CD14-positive monocyte (primary cell): ENCODE measurements at regions of chrX and their contacts with region 1.

Region 1: GRCh38 chrX:129843459-129844306 is at the start of gene ZDHHC9:
- DNase-seq: peak; percentile 75 to 80 (median 76)
- H3K4me3 ChIP-seq: peak within 1 kb of the TSS; percentile 64 to 79 (median 73)
- H3K4me3 Mint-ChIP-seq: peak within 1 kb of the TSS; percentile 86 to 91
- H3K27ac ChIP-seq: peak within 1 kb of the TSS in 1 of 2 donors; percentile 63
- H3K27ac Mint-ChIP-seq: peak within 1 kb of the TSS in 6 of 7 donors; percentile 65 to 88 (median 82)
- H3K4me1 ChIP-seq: peaks cover 9 to 15% of the 10 kb centered on the region in 2 donors
- H3K4me1 Mint-ChIP-seq: peaks cover 15% of the 10 kb centered on the region
- H3K27me3 ChIP-seq: no peaks in the 10 kb centered on the region
- H3K27me3 Mint-ChIP-seq: peaks cover 4 to 8% (median 5%) of the 10 kb centered on the region in 3 donors
- CTCF ChIP-seq: no peak
- polyA plus RNA-seq, gene ZDHHC9: 1.5 to 2.8 (median 2.7) TPM

Region 2: DNA sequence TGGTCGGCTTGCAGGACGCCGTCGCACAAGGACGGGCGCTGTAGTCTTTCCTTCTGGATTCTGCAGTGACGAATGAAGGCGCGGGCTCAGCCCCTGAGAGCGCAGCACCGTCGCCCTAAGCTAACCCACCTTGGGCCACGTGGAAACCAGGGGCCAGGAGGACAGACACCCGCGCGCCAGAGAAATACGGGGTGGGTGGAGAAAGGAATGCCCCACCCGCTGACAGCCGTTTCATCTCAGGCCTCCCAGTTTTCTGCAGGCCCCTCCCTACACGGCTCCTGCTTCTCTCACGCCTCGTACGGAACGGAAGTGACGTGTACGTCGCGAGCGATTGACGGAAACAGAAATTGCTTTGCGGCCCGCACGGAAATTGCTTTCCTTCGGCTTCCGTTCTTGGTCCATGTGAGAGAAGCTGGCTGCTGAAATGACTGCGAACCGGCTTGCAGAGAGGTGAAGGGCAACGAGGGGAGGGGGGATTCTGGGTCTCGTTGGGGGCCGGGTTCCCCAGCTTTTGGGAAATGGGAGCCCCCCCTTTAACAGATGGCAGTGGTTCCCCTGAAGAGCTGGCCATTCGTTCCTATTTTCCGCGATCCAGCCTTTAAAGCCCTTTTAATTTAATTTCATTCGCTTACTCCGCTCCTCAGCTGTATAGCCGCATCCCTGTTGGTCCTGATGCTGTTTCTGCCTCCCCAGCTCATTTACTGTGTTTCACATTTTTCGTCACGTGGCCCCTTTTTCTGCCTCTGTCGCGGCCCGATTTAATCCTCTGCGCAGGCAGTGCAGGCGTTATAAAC is 62.3 kb after region 1 on chrX and contains the start of gene UTP14A:
- intact Hi-C with region 1: loop called in 1 of 2 experiments (anchors 10 kb)
- DNase-seq: peak; percentile 83 to 88 (median 85)
- H3K4me3 ChIP-seq: peak within 1 kb of the TSS; percentile 75 to 85 (median 79)
- H3K4me3 Mint-ChIP-seq: peak within 1 kb of the TSS; percentile 87 to 92
- H3K27ac ChIP-seq: peak within 1 kb of the TSS; percentile 60 to 81
- H3K27ac Mint-ChIP-seq: peak within 1 kb of the TSS; percentile 85 to 95 (median 90)
- H3K4me1 ChIP-seq: peaks cover 5 to 7% of the 10 kb centered on the region in 2 donors
- H3K4me1 Mint-ChIP-seq: peaks cover 2% of the 10 kb centered on the region
- H3K27me3 ChIP-seq: no peaks in the 10 kb centered on the region
- H3K27me3 Mint-ChIP-seq: peaks cover 0 to 3% (median 2%) of the 10 kb centered on the region in 3 donors
- CTCF ChIP-seq: no peak
- polyA plus RNA-seq, gene UTP14A: 2.9 to 5.5 (median 3.8) TPM